ENCODE measurements at regions of chr15 and their contacts with region 1.

Region 1: DNA sequence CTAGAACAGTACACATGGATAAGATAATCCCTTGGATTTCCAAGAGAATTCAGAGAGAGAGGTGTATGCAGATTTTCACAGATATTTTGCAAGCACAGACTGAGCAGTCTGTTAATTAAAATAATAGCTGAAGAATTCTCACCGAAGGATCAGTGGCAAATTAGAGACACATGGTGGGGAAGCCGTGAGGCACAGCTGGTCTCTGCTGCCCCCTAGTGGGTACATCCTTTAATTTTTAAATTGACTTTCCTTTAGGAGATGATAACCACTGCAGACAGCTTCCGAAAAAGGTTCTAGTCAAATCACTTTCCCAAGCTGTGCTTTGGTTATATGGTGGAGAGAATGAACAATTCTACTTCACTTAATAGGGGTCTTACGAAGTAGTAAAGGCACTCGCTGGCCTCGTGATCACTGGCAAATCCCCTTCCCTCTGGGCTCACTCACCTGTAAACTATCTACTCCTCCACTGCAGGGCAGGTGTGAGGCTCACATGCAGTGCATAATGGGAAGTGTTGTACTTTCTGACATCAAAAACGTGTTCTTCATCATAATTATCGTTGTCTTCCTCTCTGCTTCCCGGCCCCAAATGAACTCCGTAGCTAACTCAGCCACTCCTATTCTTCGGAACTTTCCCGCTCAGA is 19.5 kb downstream of the MESD start:
- DNase-seq: peak; percentile 32 to 76 (median 60)
- ATAC-seq: peak; percentile 82
- H3K4me3 ChIP-seq: no peak overlapping the region
- H3K4me3 Mint-ChIP-seq: no peak overlapping the region
- H3K27ac ChIP-seq: no peak overlapping the region
- H3K27ac Mint-ChIP-seq: peak overlapping the region in 2 of 9 donors; percentile 22 to 45
- H3K4me1 ChIP-seq: no peaks in the 10 kb centered on the region
- H3K4me1 Mint-ChIP-seq: peaks cover 3 to 27% (median 16%) of the 10 kb centered on the region in 7 donors
- H3K27me3 ChIP-seq: no peaks in the 10 kb centered on the region
- H3K27me3 Mint-ChIP-seq: no peaks in the 10 kb centered on the region

Region 2: GRCh38 chr15:80455668-80456442 is 514.3 kb before region 1 on chr15:
- CTCF ChIA-PET with region 1: interaction called, 30 read pairs
- POLR2A ChIA-PET with region 1: no interaction called
- intact Hi-C with region 1: loop called in 1 of 2 experiments (anchors 1 kb)
- DNase-seq: peak; percentile 19 to 62 (median 50)
- ATAC-seq: peak; percentile 78
- H3K4me3 ChIP-seq: no peak overlapping the region
- H3K4me3 Mint-ChIP-seq: no peak overlapping the region
- H3K27ac ChIP-seq: no peak overlapping the region
- H3K27ac Mint-ChIP-seq: no peak overlapping the region
- H3K4me1 ChIP-seq: no peaks in the 10 kb centered on the region
- H3K4me1 Mint-ChIP-seq: no peaks in the 10 kb centered on the region
- H3K27me3 ChIP-seq: no peaks in the 10 kb centered on the region
- H3K27me3 Mint-ChIP-seq: peaks cover 0 to 10% (median 6%) of the 10 kb centered on the region in 5 donors

Region 3: DNA sequence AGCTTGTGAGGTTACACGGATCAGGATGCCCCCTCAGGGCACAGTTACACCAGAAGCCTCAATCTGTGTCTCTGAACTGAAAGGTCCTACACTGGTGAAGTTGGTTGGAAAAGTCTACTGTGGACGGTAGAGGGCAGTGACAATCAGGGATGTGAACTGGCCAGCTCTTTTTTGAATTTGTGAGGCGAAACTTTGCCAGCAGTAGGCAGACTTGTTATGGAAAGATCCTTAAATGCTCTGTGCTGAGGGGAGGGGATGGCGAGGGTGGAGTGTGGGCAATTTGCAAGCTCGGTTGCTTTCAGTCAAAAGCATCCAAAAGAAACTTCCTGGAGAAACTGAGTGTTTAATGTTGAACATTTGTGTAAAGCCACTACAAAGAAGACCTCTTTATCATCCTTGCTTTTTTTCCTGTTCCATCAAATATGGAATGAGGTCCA is 402.4 kb before region 1 on chr15:
- CTCF ChIA-PET with region 1: interaction called, 9 read pairs
- POLR2A ChIA-PET with region 1: no interaction called
- intact Hi-C with region 1: loop called (anchors 1 to 2 kb)
- DNase-seq: peak in 4 of 9 donors; percentile 6 to 19 (median 14)
- ATAC-seq: no peak
- H3K4me3 ChIP-seq: no peak overlapping the region
- H3K4me3 Mint-ChIP-seq: no peak overlapping the region
- H3K27ac ChIP-seq: no peak overlapping the region
- H3K27ac Mint-ChIP-seq: no peak overlapping the region
- H3K4me1 ChIP-seq: no peaks in the 10 kb centered on the region
- H3K4me1 Mint-ChIP-seq: no peaks in the 10 kb centered on the region
- H3K27me3 ChIP-seq: no peaks in the 10 kb centered on the region
- H3K27me3 Mint-ChIP-seq: peaks cover 6 to 37% (median 16%) of the 10 kb centered on the region in 5 donors